ENCODE measurements at regions of chr7 and their contacts with region 1.

Region 1: DNA sequence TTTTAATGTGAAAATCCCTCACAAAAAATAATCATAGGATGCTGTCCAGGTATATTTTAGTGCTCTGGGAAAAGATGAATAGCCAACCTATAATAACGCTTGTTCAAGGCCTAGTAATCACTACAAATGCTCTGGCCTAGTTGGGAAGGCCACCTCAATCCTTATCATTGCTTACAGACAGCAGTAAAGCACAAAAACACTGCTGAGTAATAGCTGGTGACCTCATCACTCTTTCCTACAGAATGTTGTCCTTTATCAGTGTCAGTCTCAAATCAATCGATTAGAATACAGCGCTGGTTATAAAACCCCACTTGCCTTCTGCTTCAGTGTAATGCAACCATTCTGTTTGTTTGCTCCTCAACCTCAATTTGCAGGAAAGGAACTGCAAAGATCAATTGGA is 72.6 kb upstream of the STEAP1 start:
- DNase-seq: no peak
- ATAC-seq: no peak
- H3K4me3 ChIP-seq: no peak overlapping the region
- H3K27ac ChIP-seq: no peak overlapping the region
- H3K4me1 ChIP-seq: no peaks in the 10 kb centered on the region
- H3K27me3 ChIP-seq: no peaks in the 10 kb centered on the region
- CTCF ChIP-seq: no peak
- POLR2A ChIP-seq: no peak
- RAD21 ChIP-seq: no peak

Region 2: GRCh38 chr7:88254716-88255115 is 1826.9 kb before region 1 on chr7:
- CTCF ChIA-PET with region 1: no interaction called
- POLR2A ChIA-PET with region 1: no interaction called
- dilution Hi-C with region 1: no loop called
- in situ Hi-C with region 1: loop called (anchors 25 kb)
- intact Hi-C with region 1: no loop called
- DNase-seq: no peak
- ATAC-seq: no peak
- H3K4me3 ChIP-seq: no peak overlapping the region
- H3K27ac ChIP-seq: no peak overlapping the region
- H3K4me1 ChIP-seq: no peaks in the 10 kb centered on the region
- H3K27me3 ChIP-seq: no peaks in the 10 kb centered on the region
- CTCF ChIP-seq: no peak
- POLR2A ChIP-seq: no peak
- RAD21 ChIP-seq: no peak

Region 3: GRCh38 chr7:90236721-90237289 is 155.2 kb after region 1 on chr7:
- CTCF ChIA-PET with region 1: no interaction called
- POLR2A ChIA-PET with region 1: no interaction called
- dilution Hi-C with region 1: no loop called
- in situ Hi-C with region 1: no loop called
- intact Hi-C with region 1: no loop called
- DNase-seq: no peak
- ATAC-seq: no peak
- H3K4me3 ChIP-seq: no peak overlapping the region
- H3K27ac ChIP-seq: no peak overlapping the region
- H3K4me1 ChIP-seq: no peaks in the 10 kb centered on the region
- H3K27me3 ChIP-seq: no peaks in the 10 kb centered on the region
- CTCF ChIP-seq: no peak
- POLR2A ChIP-seq: no peak
- RAD21 ChIP-seq: no peak

Region 4: DNA sequence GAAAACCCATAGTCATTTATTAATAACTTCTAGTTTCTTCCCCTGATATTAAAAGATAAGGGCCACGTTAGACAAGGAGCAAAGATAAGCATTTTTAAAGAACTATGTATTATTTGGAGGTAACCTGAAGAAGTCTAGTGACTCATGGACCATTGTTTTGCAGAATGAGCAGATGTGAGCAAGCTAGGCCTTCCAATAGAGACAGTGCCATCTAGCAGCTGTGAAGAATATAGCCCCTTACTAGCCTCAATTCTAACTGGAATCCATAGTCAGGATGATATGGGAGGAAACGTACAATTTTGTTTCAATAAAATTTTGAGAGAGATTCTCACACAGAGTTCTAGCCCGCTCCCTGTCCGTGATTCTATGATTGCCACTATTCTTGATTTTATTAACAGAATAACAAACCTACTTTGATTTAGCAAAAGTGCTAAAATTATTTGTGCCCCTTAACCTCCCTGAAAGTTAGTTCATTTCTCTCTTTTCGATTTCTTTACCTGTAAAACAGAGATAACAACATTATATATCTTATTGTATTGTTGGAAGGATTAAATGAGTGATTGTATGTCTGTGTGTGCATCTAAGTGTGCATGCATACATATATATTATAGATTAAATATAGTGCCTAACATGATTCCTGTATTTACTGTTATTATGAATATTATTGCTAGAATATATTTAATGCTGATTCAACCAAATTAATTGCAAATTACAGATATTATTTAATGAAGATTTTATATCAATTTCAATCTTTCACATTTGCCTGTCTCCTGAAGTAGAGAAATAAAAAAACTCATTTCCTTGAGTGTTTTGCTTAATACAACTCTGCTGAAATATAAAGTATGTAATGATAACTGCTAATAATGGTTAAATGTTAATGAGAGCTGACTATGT is 216.8 kb after region 1 on chr7:
- CTCF ChIA-PET with region 1: no interaction called
- POLR2A ChIA-PET with region 1: no interaction called
- dilution Hi-C with region 1: no loop called
- in situ Hi-C with region 1: no loop called
- intact Hi-C with region 1: no loop called
- DNase-seq: peak; percentile 75
- ATAC-seq: peak; percentile 96
- H3K4me3 ChIP-seq: no peak overlapping the region
- H3K27ac ChIP-seq: no peak overlapping the region
- H3K4me1 ChIP-seq: no peaks in the 10 kb centered on the region
- H3K27me3 ChIP-seq: no peaks in the 10 kb centered on the region
- CTCF ChIP-seq: peak; percentile 67
- POLR2A ChIP-seq: no peak
- RAD21 ChIP-seq: peak; percentile 65